OCI-LY7 (cell line): ENCODE measurements at regions of chr5 and their contacts with region 1.

Region 1: DNA sequence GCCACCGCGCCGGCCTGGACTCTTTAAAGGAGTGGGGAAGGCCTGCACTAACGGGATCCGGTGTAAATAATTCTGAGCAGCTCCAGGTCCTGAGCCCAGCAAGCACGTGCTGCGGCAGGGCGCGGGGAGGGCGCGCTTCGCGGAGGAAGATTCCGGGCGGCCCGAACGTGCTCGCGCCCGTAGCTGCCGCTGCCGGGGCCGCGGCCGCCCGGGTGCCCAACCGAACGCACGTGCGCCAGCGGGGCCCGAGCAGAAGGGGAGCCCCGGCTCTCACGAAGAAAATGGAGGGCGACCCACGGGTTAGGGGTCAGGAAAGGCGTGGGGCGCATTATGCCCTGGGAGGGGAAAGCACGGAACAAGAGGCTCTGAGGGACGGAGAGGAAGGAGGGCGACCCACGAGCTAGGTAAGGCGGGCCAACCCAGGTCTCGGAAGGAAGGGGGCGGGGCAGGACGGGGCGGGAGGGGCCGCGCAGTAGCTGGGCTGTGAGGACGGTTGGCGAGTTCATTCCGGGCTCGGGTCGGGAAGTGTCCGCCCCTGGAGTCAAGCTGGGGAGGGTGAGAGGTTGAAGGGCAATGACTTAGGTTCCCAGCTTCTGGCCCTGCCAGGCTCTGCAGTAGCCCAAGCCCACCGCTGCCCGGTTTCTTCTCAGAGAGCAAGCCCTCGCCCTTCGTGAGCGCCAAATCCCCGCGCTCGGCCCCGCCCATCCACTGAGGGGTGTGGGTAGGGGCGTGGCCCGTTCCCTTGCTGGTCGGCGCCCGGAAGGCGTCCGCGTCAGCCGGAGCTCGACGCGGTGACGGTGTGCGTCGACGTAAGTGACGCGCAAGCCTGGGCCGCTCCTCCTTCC is at the start of gene ZNF131:
- DNase-seq: peak; percentile 98
- H3K4me3 ChIP-seq: peak within 1 kb of the TSS; percentile 80
- H3K27ac ChIP-seq: peak within 1 kb of the TSS; percentile 77
- H3K4me1 ChIP-seq: peaks cover 35% of the 10 kb centered on the region
- CTCF ChIP-seq: no peak
- total RNA-seq, gene ZNF131: 59.0 and 61.0 TPM in 2 replicates

Region 2: DNA sequence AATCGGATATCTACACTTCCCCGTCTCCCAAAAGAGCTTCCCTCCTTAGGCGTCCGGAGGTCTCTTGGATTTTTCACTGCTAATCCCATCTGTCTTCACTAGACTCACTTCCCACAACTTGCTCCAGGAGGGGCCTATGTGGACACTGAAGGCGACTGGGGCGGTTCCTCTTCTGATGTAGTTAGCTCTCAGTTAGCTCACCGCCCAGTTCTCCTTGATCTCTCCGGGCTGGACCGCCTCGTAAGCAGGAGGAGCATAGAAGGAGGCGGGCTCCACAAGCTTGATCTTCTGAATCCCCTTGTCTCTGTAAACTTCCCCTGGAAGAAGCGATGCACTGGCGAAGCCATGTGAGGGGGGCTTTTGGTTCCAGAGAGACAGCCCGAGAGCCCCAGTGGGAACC is 197.2 kb before region 1 on chr5:
- CTCF ChIA-PET with region 1: no interaction called
- POLR2A ChIA-PET with region 1: no interaction called
- intact Hi-C with region 1: no loop called
- DNase-seq: no peak
- H3K4me3 ChIP-seq: no peak overlapping the region
- H3K27ac ChIP-seq: no peak overlapping the region
- H3K4me1 ChIP-seq: no peaks in the 10 kb centered on the region
- CTCF ChIP-seq: no peak

Region 3: GRCh38 chr5:42994246-42995151 is 126.4 kb before region 1 on chr5:
- CTCF ChIA-PET with region 1: no interaction called
- POLR2A ChIA-PET with region 1: interaction called, 12 read pairs
- intact Hi-C with region 1: loop called (anchors 5 kb)
- DNase-seq: peak; percentile 92
- H3K4me3 ChIP-seq: peak overlapping the region; percentile 79
- H3K27ac ChIP-seq: peak overlapping the region; percentile 63
- H3K4me1 ChIP-seq: peaks cover 30% of the 10 kb centered on the region
- CTCF ChIP-seq: peak; percentile 86

Region 4: DNA sequence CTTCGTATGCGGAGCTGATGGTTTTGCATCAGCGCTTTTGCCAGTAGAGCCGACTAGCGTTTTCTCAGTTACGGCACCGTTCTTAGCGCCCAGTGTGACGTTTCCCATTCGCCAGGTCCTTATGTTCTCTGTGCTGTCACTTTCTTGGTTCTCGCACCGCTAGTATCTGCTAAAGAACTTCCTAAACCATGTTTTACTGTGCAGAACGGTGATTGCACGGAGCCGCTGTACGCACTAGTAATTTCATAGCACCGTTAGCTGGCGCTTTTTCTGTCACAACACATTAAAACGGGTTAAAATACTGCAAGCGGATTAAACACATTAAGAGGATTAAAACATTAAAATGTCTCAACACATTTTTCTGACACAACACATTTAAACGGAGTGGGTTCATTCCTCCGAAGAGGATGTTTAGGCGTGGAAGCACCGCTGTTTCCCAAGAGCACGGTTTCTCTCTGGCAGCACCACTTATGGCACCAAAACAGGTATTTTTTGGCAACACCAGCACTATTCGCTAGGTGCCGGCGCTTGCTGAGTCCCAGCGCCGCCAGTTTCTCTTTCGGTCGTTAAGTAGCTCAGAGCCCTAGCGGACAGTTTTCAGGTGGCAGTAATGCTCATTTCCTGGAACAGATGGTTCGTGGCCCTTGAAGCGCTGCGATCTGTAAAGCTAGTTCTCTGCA is 101.2 kb before region 1 on chr5:
- CTCF ChIA-PET with region 1: no interaction called
- POLR2A ChIA-PET with region 1: interaction called, 22 read pairs
- intact Hi-C with region 1: no loop called
- DNase-seq: peak; percentile 95
- H3K4me3 ChIP-seq: peak overlapping the region; percentile 76
- H3K27ac ChIP-seq: peak overlapping the region; percentile 93
- H3K4me1 ChIP-seq: peaks cover 40% of the 10 kb centered on the region
- CTCF ChIP-seq: peak; percentile 73

Region 5: GRCh38 chr5:43066799-43067741 is 53.9 kb before region 1 on chr5:
- CTCF ChIA-PET with region 1: no interaction called
- POLR2A ChIA-PET with region 1: interaction called, 8 read pairs
- intact Hi-C with region 1: loop called (anchors 1 kb)
- DNase-seq: peak; percentile 93
- H3K4me3 ChIP-seq: peak overlapping the region; percentile 85
- H3K27ac ChIP-seq: peak overlapping the region; percentile 92
- H3K4me1 ChIP-seq: peaks cover 29% of the 10 kb centered on the region
- CTCF ChIP-seq: no peak

Region 6: GRCh38 chr5:43313035-43313853 is 192.3 kb after region 1 on chr5 and contains the start of gene HMGCS1:
- CTCF ChIA-PET with region 1: no interaction called
- POLR2A ChIA-PET with region 1: interaction called, 34 read pairs
- intact Hi-C with region 1: loop called (anchors 1 kb)
- DNase-seq: peak; percentile 99
- H3K4me3 ChIP-seq: peak within 1 kb of the TSS; percentile 94
- H3K27ac ChIP-seq: peak within 1 kb of the TSS; percentile 80
- H3K4me1 ChIP-seq: peaks cover 46% of the 10 kb centered on the region
- CTCF ChIP-seq: no peak; the same call in 1 of the 2 replicates
- total RNA-seq, gene HMGCS1: 59.5 and 66.9 TPM in 2 replicates